ENCODE measurements at regions of chr3 and their contacts with region 1.

Region 1: GRCh38 chr3:178966299-178967176 is 105.1 kb downstream of the ZMAT3 start:
- DNase-seq: no peak
- H3K4me3 Mint-ChIP-seq: no peak overlapping the region
- H3K27ac Mint-ChIP-seq: no peak overlapping the region
- H3K4me1 Mint-ChIP-seq: peaks cover 12% of the 10 kb centered on the region
- H3K27me3 Mint-ChIP-seq: no peaks in the 10 kb centered on the region

Region 2: GRCh38 chr3:178436773-178437172 is 529.8 kb before region 1 on chr3:
- CTCF ChIA-PET with region 1: interaction called, 3 read pairs
- POLR2A ChIA-PET with region 1: no interaction called
- intact Hi-C with region 1: loop called (anchors 2 kb)
- DNase-seq: no peak
- H3K4me3 Mint-ChIP-seq: no peak overlapping the region
- H3K27ac Mint-ChIP-seq: no peak overlapping the region
- H3K4me1 Mint-ChIP-seq: no peaks in the 10 kb centered on the region
- H3K27me3 Mint-ChIP-seq: no peaks in the 10 kb centered on the region

Measured in activated CD4-positive, alpha-beta memory T cell treated with anti-CD3 and anti-CD28 coated beads for 36 hours (primary cell).